CD4-positive, alpha-beta T cell (primary cell): ENCODE measurements at regions of chrX and their contacts with region 1.

Region 1: DNA sequence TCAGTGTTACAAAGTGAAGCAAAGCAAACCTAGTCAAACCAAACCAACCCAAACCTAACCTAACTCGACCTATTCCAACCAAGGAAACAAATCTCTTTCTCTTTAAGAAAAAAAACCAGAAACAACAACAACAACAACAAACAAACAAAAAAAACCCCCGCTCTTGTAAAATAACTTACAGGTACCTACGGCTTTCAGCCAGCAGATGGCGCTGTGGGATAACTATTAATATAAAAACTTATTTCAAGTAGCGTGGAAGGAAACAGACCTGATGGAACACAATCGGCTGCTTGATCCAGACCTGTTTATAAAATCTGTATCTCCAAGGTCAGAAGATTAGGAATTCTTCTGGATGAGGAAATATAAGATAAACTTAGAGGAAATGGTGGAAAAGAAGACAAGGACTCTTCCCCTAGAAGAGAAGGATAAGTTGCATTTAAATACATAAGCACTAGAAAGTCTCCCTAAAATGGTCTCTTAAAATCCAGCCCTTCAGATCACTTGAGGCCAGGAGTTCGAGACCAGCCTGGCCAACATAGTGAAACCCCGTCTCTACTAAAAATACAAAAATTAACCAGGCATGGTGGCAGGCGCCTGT is 34.4 kb upstream of the CDKL5 start:
- DNase-seq: peak; percentile 44 to 83 (median 56)
- ATAC-seq: no peak
- H3K4me3 ChIP-seq: no peak overlapping the region
- H3K4me3 Mint-ChIP-seq: no peak overlapping the region
- H3K27ac ChIP-seq: no peak overlapping the region
- H3K27ac Mint-ChIP-seq: no peak overlapping the region
- H3K4me1 ChIP-seq: no peaks in the 10 kb centered on the region
- H3K4me1 Mint-ChIP-seq: no peaks in the 10 kb centered on the region
- H3K27me3 ChIP-seq: no peaks in the 10 kb centered on the region
- H3K27me3 Mint-ChIP-seq: no peaks in the 10 kb centered on the region
- CTCF ChIP-seq: peak; percentile 62

Region 2: DNA sequence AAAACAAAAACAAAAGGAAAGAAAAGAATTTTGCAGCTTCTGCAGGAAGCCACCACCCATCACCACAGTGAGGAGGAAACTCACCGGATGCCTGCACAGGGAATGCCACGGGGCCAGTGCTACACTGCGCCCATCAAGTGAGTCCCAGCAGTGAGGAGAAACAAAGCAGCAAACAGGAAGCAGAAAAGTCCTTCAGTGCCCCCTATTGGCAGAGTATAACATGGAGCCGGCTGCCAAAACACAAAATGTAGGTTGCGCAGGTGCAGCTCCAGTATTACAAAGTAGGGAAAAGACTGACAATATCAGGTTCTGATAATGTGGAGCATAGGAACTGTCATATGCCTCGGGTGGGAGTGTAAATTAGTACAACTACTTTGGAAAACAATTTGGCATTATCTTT is 13.2 kb before region 1 on chrX:
- CTCF ChIA-PET with region 1: no interaction called
- POLR2A ChIA-PET with region 1: no interaction called
- intact Hi-C with region 1: no loop called
- DNase-seq: peak in 5 of 14 experiments; percentile 2 to 57 (median 43)
- ATAC-seq: peak; percentile 69
- H3K4me3 ChIP-seq: no peak overlapping the region
- H3K4me3 Mint-ChIP-seq: no peak overlapping the region
- H3K27ac ChIP-seq: no peak overlapping the region
- H3K27ac Mint-ChIP-seq: no peak overlapping the region
- H3K4me1 ChIP-seq: peaks cover 6% of the 10 kb centered on the region
- H3K4me1 Mint-ChIP-seq: peaks cover 6% of the 10 kb centered on the region
- H3K27me3 ChIP-seq: no peaks in the 10 kb centered on the region
- H3K27me3 Mint-ChIP-seq: no peaks in the 10 kb centered on the region
- CTCF ChIP-seq: peak; percentile 58

Region 3: DNA sequence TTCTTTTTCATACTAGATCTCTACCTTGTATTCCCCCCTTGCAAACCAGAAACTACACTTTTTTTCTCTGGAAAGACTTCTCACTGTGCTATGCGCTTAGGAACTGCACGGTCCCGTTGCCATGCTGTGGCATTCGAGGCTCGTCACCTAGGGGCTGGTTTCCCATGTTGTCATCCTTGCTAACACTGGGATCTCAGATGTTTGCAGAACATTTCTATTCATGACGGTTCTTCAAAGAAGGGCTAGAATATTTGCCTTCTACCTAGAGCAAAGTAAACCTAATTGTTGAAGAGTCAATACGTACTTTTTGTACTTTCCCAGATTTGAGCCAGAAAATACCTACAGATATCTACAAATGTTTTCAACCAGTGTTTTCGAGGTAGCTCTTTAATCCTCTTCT is 239.9 kb after region 1 on chrX:
- CTCF ChIA-PET with region 1: no interaction called
- POLR2A ChIA-PET with region 1: no interaction called
- intact Hi-C with region 1: no loop called
- DNase-seq: no peak
- ATAC-seq: no peak
- H3K4me3 ChIP-seq: no peak overlapping the region
- H3K4me3 Mint-ChIP-seq: no peak overlapping the region
- H3K27ac ChIP-seq: no peak overlapping the region
- H3K27ac Mint-ChIP-seq: no peak overlapping the region
- H3K4me1 ChIP-seq: no peaks in the 10 kb centered on the region
- H3K4me1 Mint-ChIP-seq: no peaks in the 10 kb centered on the region
- H3K27me3 ChIP-seq: no peaks in the 10 kb centered on the region
- H3K27me3 Mint-ChIP-seq: no peaks in the 10 kb centered on the region
- CTCF ChIP-seq: no peak

Region 4: GRCh38 chrX:18886344-18887161 is 495.5 kb after region 1 on chrX:
- CTCF ChIA-PET with region 1: no interaction called
- POLR2A ChIA-PET with region 1: no interaction called
- intact Hi-C with region 1: loop called in 1 of 2 experiments (anchors 5 kb)
- DNase-seq: peak in 12 of 14 experiments; percentile 13 to 68 (median 29)
- ATAC-seq: peak; percentile 60
- H3K4me3 ChIP-seq: peak overlapping the region; percentile 61
- H3K4me3 Mint-ChIP-seq: peak overlapping the region; percentile 87
- H3K27ac ChIP-seq: peak overlapping the region; percentile 29 to 63
- H3K27ac Mint-ChIP-seq: peak overlapping the region; percentile 79
- H3K4me1 ChIP-seq: peaks cover 35% of the 10 kb centered on the region
- H3K4me1 Mint-ChIP-seq: peaks cover 40% of the 10 kb centered on the region
- H3K27me3 ChIP-seq: no peaks in the 10 kb centered on the region
- H3K27me3 Mint-ChIP-seq: no peaks in the 10 kb centered on the region
- CTCF ChIP-seq: peak; percentile 32

Region 5: GRCh38 chrX:18896680-18897544 is 505.9 kb after region 1 on chrX:
- CTCF ChIA-PET with region 1: no interaction called
- POLR2A ChIA-PET with region 1: no interaction called
- intact Hi-C with region 1: loop called in 1 of 2 experiments (anchors 2 kb)
- DNase-seq: no peak
- ATAC-seq: no peak
- H3K4me3 ChIP-seq: no peak overlapping the region
- H3K4me3 Mint-ChIP-seq: no peak overlapping the region
- H3K27ac ChIP-seq: no peak overlapping the region
- H3K27ac Mint-ChIP-seq: no peak overlapping the region
- H3K4me1 ChIP-seq: no peaks in the 10 kb centered on the region
- H3K4me1 Mint-ChIP-seq: no peaks in the 10 kb centered on the region
- H3K27me3 ChIP-seq: no peaks in the 10 kb centered on the region
- H3K27me3 Mint-ChIP-seq: no peaks in the 10 kb centered on the region
- CTCF ChIP-seq: no peak

Region 6: DNA sequence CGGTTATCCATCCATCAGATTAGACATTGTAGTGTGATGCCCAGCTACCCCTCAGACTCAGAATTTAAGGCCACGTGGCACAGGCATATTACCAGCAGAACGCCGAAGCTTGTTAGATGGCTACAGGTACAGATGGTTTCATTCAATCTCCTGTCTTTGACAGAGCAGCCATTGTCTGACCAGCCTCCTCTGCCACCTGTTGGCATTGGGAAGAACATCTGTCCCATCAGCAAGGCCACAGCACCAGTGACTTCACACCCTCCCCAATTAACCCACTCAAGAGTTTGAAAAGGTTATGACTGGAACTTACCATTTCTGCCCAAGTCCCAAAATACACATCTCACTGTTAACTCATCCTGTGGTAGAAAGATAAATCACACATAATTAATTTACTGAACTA is 614.9 kb after region 1 on chrX:
- CTCF ChIA-PET with region 1: no interaction called
- POLR2A ChIA-PET with region 1: no interaction called
- intact Hi-C with region 1: loop called in 1 of 2 experiments (anchors 10 kb)
- DNase-seq: peak in 2 of 14 experiments; percentile 1 to 17
- ATAC-seq: no peak
- H3K4me3 ChIP-seq: no peak overlapping the region
- H3K4me3 Mint-ChIP-seq: no peak overlapping the region
- H3K27ac ChIP-seq: no peak overlapping the region
- H3K27ac Mint-ChIP-seq: no peak overlapping the region
- H3K4me1 ChIP-seq: no peaks in the 10 kb centered on the region
- H3K4me1 Mint-ChIP-seq: no peaks in the 10 kb centered on the region
- H3K27me3 ChIP-seq: no peaks in the 10 kb centered on the region
- H3K27me3 Mint-ChIP-seq: no peaks in the 10 kb centered on the region
- CTCF ChIP-seq: no peak

Region 7: GRCh38 chrX:19334945-19335626 is 944.0 kb after region 1 on chrX:
- CTCF ChIA-PET with region 1: interaction called, 14 read pairs
- POLR2A ChIA-PET with region 1: no interaction called
- intact Hi-C with region 1: loop called (anchors 1 kb)
- DNase-seq: peak in 3 of 14 experiments; percentile 10 to 45 (median 30)
- ATAC-seq: peak; percentile 32
- H3K4me3 ChIP-seq: no peak overlapping the region
- H3K4me3 Mint-ChIP-seq: no peak overlapping the region
- H3K27ac ChIP-seq: no peak overlapping the region
- H3K27ac Mint-ChIP-seq: no peak overlapping the region
- H3K4me1 ChIP-seq: no peaks in the 10 kb centered on the region
- H3K4me1 Mint-ChIP-seq: no peaks in the 10 kb centered on the region
- H3K27me3 ChIP-seq: no peaks in the 10 kb centered on the region
- H3K27me3 Mint-ChIP-seq: no peaks in the 10 kb centered on the region
- CTCF ChIP-seq: no peak